IMR-90 (cell line): ENCODE measurements at regions of chr5 and their contacts with region 1.

Region 1: DNA sequence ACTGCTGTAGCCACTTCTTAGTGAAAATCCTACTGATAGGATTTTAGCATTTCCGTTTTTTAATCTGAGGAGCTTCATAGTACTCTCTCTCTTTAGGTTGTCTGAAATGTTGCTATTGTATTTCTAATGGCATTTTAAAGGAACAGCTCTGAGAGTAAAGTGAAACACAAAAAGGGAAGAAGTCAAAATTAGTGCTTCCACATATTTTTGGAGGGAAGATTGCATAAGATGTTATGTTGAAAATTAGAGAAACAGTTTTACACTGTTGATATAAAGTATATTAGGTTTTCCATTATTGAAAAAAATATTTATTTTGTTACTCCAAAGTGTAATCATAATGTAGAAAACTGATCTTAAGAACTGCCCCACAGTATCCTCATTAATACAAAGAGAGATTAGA is 525.1 kb downstream of the TAF11L14 start:
- DNase-seq: no peak
- ATAC-seq: no peak
- H3K4me3 ChIP-seq: no peak overlapping the region
- H3K27ac ChIP-seq: no peak overlapping the region
- H3K4me1 ChIP-seq: no peaks in the 10 kb centered on the region
- H3K27me3 ChIP-seq: no peaks in the 10 kb centered on the region
- CTCF ChIP-seq: no peak
- POLR2A ChIP-seq: no peak
- RAD21 ChIP-seq: no peak

Region 2: GRCh38 chr5:18202149-18202548 is 42.8 kb after region 1 on chr5:
- CTCF ChIA-PET with region 1: no interaction called
- POLR2A ChIA-PET with region 1: no interaction called
- dilution Hi-C with region 1: no loop called
- in situ Hi-C with region 1: no loop called
- intact Hi-C with region 1: loop called (anchors 2 kb)
- DNase-seq: no peak
- ATAC-seq: no peak
- H3K4me3 ChIP-seq: no peak overlapping the region
- H3K27ac ChIP-seq: no peak overlapping the region
- H3K4me1 ChIP-seq: no peaks in the 10 kb centered on the region
- H3K27me3 ChIP-seq: no peaks in the 10 kb centered on the region
- CTCF ChIP-seq: no peak
- POLR2A ChIP-seq: no peak
- RAD21 ChIP-seq: no peak

Region 3: GRCh38 chr5:18244309-18244708 is 85.0 kb after region 1 on chr5:
- CTCF ChIA-PET with region 1: no interaction called
- POLR2A ChIA-PET with region 1: no interaction called
- dilution Hi-C with region 1: no loop called
- in situ Hi-C with region 1: no loop called
- intact Hi-C with region 1: no loop called
- DNase-seq: no peak
- ATAC-seq: no peak
- H3K4me3 ChIP-seq: no peak overlapping the region
- H3K27ac ChIP-seq: no peak overlapping the region
- H3K4me1 ChIP-seq: no peaks in the 10 kb centered on the region
- H3K27me3 ChIP-seq: no peaks in the 10 kb centered on the region
- CTCF ChIP-seq: no peak
- POLR2A ChIP-seq: no peak
- RAD21 ChIP-seq: no peak

Region 4: DNA sequence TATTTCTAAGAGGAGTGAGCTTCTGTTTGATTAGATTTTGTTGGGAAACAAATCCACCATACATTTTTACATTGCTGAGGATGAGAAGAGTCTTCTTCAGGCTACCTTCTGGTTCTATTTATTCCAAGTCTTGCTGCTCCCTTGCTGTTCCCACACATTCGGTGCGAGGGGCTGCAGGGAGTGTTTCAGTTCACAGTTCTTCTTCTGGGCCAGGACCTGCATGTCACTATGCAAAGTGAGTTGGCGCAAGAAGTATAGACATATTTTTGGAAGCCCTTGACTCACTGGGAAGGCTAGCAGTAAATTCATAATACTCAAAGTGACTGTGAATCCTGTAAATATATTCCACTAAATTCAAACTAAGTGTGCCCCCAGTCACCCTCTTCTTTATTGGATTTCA is 132.8 kb after region 1 on chr5:
- CTCF ChIA-PET with region 1: no interaction called
- POLR2A ChIA-PET with region 1: no interaction called
- dilution Hi-C with region 1: no loop called
- in situ Hi-C with region 1: no loop called
- intact Hi-C with region 1: no loop called
- DNase-seq: no peak
- ATAC-seq: no peak
- H3K4me3 ChIP-seq: no peak overlapping the region
- H3K27ac ChIP-seq: no peak overlapping the region
- H3K4me1 ChIP-seq: no peaks in the 10 kb centered on the region
- H3K27me3 ChIP-seq: no peaks in the 10 kb centered on the region
- CTCF ChIP-seq: no peak
- POLR2A ChIP-seq: no peak
- RAD21 ChIP-seq: no peak